ENCODE measurements at regions of chr10 and their contacts with region 1.

Region 1: DNA sequence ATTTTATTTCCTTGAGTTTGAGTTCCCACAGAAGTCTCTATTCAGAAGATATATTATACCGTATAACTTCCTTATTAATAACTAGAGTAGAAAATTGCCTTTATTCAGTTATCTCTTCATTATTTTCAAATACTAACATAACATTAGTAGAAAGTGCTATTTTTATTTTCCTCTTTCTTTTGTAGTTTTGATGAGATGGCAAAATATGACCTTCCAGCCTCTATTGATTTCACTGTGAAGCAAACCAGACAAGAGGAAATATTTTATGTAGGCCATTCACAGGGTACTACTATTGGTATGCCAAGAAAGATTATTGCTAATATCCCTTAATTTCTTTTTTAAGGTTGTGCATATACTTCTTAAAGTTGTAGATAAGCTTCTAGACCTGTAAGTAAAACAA is 7.9 kb downstream of the LIPJ start:
- DNase-seq: no peak
- H3K4me3 ChIP-seq: no peak overlapping the region
- H3K4me3 Mint-ChIP-seq: no peak overlapping the region
- H3K27ac ChIP-seq: no peak overlapping the region
- H3K27ac Mint-ChIP-seq: no peak overlapping the region
- H3K4me1 ChIP-seq: no peaks in the 10 kb centered on the region
- H3K4me1 Mint-ChIP-seq: no peaks in the 10 kb centered on the region
- H3K27me3 ChIP-seq: no peaks in the 10 kb centered on the region
- H3K27me3 Mint-ChIP-seq: peaks cover 3 to 6% of the 10 kb centered on the region in 2 donors

Region 2: DNA sequence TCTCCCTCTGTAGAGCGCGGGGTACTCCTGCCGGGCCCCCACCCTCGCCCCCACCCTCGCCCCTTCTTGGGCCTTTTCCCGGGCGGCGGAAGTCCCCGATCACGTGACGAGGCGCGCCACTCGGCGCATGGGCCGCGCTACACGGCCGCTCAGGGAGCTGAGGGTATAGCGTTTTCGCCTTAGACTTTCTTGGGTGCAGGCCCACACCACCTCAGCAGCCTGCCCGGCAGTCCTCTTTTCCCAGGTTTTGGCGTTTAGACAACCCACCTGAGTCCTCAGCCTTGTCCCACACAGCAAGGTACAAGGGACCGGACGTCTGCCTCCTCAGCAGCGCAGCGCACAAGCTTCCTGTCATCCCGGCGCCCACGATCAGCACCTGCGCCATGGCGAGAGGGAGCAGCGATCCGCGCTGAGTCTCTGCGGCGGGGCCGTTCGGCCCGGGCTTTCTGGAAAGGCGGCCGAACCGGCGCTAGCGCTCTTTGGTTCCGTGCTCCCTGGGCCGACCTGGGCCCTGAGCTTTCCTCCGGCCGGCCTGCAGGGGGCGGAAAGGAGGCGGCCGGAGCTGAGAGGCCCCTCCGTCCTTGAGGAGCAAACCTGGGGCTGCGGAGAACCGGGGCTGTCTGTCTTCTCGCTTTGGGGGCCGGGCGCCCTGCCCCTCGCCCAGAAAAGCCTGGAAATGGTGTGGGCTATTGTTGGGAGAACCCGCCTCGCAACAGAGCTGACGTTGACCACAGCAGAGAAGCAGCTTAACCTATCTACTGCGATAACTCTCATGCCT is 11.5 kb before region 1 on chr10 and contains the start of gene RNLS:
- CTCF ChIA-PET with region 1: interaction called, 16 read pairs
- POLR2A ChIA-PET with region 1: interaction called, 6 read pairs
- intact Hi-C with region 1: no loop called
- DNase-seq: peak; percentile 60 to 73 (median 65)
- H3K4me3 ChIP-seq: peak within 1 kb of the TSS; percentile 72 to 89
- H3K4me3 Mint-ChIP-seq: peak within 1 kb of the TSS; percentile 91 to 96 (median 93)
- H3K27ac ChIP-seq: peak within 1 kb of the TSS; percentile 77
- H3K27ac Mint-ChIP-seq: peak within 1 kb of the TSS; percentile 78 to 96 (median 93)
- H3K4me1 ChIP-seq: peaks cover 7% of the 10 kb centered on the region
- H3K4me1 Mint-ChIP-seq: peaks cover 6 to 26% (median 14%) of the 10 kb centered on the region in 4 donors
- H3K27me3 ChIP-seq: no peaks in the 10 kb centered on the region
- H3K27me3 Mint-ChIP-seq: no peaks in the 10 kb centered on the region
- total RNA-seq, gene RNLS: 1.7 to 1.9 TPM